H1 (cell line): ENCODE measurements at regions of chr1 and their contacts with region 1.

Region 1: DNA sequence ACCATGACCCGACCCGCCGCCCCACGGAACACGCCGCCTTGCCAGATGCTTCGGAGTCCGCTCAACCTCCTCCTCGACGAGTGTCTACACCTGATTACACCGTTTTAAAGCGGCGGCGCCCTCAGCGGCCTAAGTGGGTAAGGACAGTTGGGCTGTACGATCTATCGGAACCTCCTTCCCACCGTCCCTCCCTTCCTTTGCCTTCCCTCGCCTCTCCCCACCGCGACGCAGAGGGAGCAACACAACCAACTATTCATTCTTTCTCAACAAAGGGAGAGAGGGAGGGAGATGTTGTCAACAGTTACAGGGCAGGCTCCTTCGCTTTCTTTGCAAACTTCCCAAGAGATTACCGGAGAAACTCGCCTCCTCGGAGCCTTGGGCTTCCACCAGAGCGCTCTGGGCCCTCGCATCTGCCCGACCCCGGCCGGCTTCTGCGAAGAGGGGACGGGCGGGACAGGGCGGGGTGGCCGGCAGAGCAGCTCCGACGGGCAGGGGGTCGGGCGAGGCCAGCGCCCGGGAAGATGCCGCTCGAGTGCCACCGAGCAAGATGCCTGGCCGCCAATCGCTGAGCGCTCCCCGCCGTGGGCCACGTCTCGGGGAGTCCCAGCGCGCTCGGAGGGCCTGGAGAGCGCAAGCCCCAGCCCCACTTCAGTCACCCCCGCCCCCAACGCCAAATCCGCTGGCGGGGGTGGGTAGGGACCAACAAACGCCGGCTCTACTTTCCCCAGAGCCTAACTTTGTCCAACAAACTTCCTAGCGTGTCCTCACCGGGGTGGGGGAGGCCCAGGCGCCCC is 683 bp downstream of the BCAR3 start:
- DNase-seq: peak; percentile 50 to 84
- H3K4me3 ChIP-seq: peak overlapping the region; percentile 64 to 87 (median 70)
- H3K27ac ChIP-seq: no peak overlapping the region
- H3K4me1 ChIP-seq: peaks cover 5 to 12% (median 5%) of the 10 kb centered on the region in 4 experiments
- H3K27me3 ChIP-seq: peaks cover 0 to 8% (median 2%) of the 10 kb centered on the region in 4 experiments; a peak in 4 of 7 replicates
- CTCF ChIP-seq: peak; percentile 59 to 91 (median 84)
- EP300 ChIP-seq: no peak
- POLR2A ChIP-seq: no peak; a peak in 1 of 3 replicates
- RAD21 ChIP-seq: peak; percentile 61 to 68

Region 2: GRCh38 chr1:93635614-93636543 is 45.1 kb before region 1 on chr1:
- CTCF ChIA-PET with region 1: interaction called, 98 read pairs
- POLR2A ChIA-PET with region 1: interaction called, 4 read pairs
- DNase-seq: peak in 1 of 2 experiments; percentile 71
- H3K4me3 ChIP-seq: peak overlapping the region in 3 of 4 experiments; percentile 8 to 19 (median 12); a peak in 3 of 8 replicates
- H3K27ac ChIP-seq: peak overlapping the region; percentile 79; the same call in 1 of the 2 replicates
- H3K4me1 ChIP-seq: peaks cover 0 to 16% (median 12%) of the 10 kb centered on the region in 4 experiments; a peak in 6 of 7 replicates
- H3K27me3 ChIP-seq: no peaks in the 10 kb centered on the region
- CTCF ChIP-seq: no peak
- EP300 ChIP-seq: peak in 1 of 2 experiments; percentile 67; a peak in 1 of 3 replicates
- POLR2A ChIP-seq: peak in 1 of 2 experiments; percentile 55; a peak in 1 of 3 replicates
- RAD21 ChIP-seq: 0 out of 4 replicates have a peak, but pooled peaks have one; percentile 2 to 4

Region 3: GRCh38 chr1:93666613-93667384 is 14.2 kb before region 1 on chr1:
- CTCF ChIA-PET with region 1: interaction called, 15 read pairs
- POLR2A ChIA-PET with region 1: interaction called, 10 read pairs
- DNase-seq: no peak
- H3K4me3 ChIP-seq: no peak overlapping the region
- H3K27ac ChIP-seq: no peak overlapping the region
- H3K4me1 ChIP-seq: peaks cover 6 to 26% (median 16%) of the 10 kb centered on the region in 4 experiments
- H3K27me3 ChIP-seq: no peaks in the 10 kb centered on the region
- CTCF ChIP-seq: no peak
- EP300 ChIP-seq: no peak
- POLR2A ChIP-seq: no peak
- RAD21 ChIP-seq: no peak

Region 4: DNA sequence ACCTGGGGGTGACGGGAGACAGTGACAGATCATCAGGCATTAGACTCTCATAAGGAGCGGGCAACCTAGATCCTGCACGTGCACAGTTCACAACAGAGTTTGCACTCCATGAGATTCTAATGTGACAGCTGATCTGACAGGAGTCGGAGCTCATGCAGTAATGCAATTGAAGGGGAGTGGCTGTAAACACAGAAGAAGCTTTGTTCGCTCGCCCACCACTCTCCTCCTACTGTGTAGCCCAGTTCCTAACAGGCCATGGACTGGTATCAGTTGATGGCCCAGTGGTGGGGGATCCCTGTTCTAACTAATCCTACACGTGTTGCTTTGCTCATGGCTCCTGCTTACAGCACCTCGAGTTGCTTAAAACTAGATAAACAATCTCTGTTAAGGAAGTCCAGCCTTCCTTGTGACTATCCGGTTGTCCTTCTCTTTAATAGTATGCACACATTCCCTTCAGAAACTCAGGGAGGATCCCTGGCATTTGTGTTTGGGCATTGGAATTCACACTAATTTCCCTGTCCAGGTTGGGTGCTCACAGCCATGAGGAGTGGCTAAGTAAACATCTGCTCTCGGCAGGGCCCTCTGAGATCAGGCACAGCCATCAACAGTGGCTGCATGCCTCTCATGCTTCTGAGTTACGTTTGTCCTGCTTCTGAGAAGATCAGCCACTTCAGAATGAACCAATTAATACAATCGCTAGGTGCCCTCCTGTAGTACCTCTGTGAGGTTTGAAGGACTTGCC is 881.7 kb after region 1 on chr1:
- CTCF ChIA-PET with region 1: no interaction called
- POLR2A ChIA-PET with region 1: no interaction called
- DNase-seq: no peak
- H3K4me3 ChIP-seq: no peak overlapping the region
- H3K27ac ChIP-seq: no peak overlapping the region
- H3K4me1 ChIP-seq: no peaks in the 10 kb centered on the region
- H3K27me3 ChIP-seq: peaks cover 0 to 1% (median 0%) of the 10 kb centered on the region in 4 experiments; a peak in 1 of 7 replicates
- CTCF ChIP-seq: no peak
- EP300 ChIP-seq: no peak
- POLR2A ChIP-seq: no peak
- RAD21 ChIP-seq: no peak